ENCODE measurements at regions of chr6 and their contacts with region 1.

Region 1: DNA sequence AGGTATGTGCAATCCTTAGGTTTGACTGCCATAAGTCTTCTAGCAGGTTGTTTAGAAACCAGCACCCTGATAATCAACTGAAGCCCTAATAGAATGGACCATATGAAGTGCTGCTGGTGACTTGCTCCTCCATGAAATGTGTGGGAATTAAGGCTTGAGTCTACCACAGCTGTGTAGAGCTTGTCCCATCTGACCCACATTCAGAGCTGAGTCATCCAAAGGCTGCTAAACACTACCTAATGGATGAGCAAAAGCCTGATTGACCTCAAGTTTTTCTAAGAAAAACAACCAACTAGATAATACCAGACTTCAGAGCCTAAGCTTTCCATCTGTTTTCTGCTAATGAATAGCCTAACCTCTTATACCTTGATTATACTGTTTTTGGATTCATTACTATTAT is 120.3 kb upstream of the MOCS1 start:
- DNase-seq: peak; percentile 75
- H3K4me3 ChIP-seq: no peak overlapping the region
- H3K27ac ChIP-seq: no peak overlapping the region
- H3K4me1 ChIP-seq: peaks cover 10% of the 10 kb centered on the region
- H3K27me3 ChIP-seq: no peaks in the 10 kb centered on the region
- CTCF ChIP-seq: no peak

Region 2: GRCh38 chr6:39934131-39934757 is 120.4 kb before region 1 on chr6 and contains the start of gene MOCS1:
- CTCF ChIA-PET with region 1: no interaction called
- dilution Hi-C with region 1: no loop called
- in situ Hi-C with region 1: no loop called
- intact Hi-C with region 1: no loop called
- DNase-seq: peak; percentile 48
- H3K4me3 ChIP-seq: peak within 1 kb of the TSS; percentile 65 to 81 (median 71)
- H3K27ac ChIP-seq: no peak within 1 kb of the TSS
- H3K4me1 ChIP-seq: peaks cover 5% of the 10 kb centered on the region
- H3K27me3 ChIP-seq: no peaks in the 10 kb centered on the region
- CTCF ChIP-seq: no peak
- total RNA-seq, gene MOCS1: 5.2 to 7.1 TPM

Region 3: DNA sequence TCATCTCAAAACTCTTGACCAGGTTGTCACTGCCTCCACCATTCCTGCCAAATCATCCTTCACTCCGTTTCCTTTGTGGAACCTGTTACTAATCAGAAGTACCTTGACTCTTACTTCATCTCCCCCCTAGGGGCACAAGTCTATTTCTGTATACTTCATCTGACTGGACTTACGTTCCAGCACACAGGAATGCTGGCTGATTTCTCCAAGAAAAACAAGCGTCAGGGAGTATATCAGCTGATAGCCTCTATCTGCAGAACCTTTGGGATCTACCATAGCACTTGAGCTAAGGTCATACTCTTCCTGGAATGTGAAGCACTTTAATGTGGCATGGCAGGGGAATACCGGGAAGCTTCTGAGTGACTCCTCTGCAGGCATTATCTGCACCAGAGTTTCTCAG is 57.7 kb after region 1 on chr6:
- CTCF ChIA-PET with region 1: no interaction called
- dilution Hi-C with region 1: loop called (anchors 5 kb)
- in situ Hi-C with region 1: no loop called
- intact Hi-C with region 1: no loop called
- DNase-seq: no peak
- H3K4me3 ChIP-seq: no peak overlapping the region
- H3K27ac ChIP-seq: no peak overlapping the region
- H3K4me1 ChIP-seq: no peaks in the 10 kb centered on the region
- H3K27me3 ChIP-seq: no peaks in the 10 kb centered on the region
- CTCF ChIP-seq: no peak